GM12878 (cell line): ENCODE measurements at regions of chr9 and their contacts with region 1.

Region 1: DNA sequence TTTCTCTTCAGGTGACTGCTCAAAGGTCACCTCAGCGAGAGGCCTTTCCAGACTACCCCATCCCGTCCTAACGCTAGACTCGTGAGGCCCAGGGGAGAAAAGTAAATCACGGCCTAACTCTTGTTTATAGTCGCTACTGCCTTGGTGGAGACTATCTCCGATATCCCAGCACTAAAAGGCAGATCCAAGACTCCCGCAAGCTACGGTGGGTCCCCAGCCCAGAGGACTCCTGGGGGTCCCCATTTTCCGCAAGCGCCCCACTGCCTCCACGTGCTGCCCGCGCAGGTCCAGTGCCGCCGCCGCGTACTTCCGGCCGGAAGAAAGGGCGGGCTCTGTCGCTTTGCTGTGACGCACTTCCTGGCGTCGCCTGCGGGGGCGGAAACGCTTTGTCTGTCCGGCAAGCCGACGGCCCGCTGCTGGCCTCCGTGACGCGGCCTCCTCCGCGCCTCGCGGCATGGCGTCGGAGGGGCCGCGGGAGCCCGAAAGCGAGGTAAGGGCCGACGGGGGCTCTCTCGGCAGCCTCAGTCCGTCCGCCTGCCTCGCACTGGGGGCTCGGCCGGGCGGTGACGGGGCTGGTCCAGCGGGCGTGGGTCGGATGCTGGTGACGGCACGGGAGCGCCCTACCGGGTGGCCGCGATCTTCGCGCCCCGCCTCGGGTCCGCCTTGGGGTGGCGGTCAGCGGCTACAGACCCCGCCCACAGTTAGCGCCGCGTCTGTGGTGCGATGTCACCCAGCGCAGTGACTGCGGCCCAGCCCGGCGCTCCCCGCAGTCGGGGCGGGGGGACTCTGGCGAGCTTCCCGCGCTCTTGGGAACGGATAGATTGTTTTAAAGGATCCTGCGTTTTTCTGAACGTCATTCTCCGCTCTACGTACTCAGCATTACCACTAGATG is at the start of gene SECISBP2:
- DNase-seq: peak; percentile 79
- ATAC-seq: peak; percentile 92
- H3K4me3 ChIP-seq: peak within 1 kb of the TSS; percentile 74
- H3K27ac ChIP-seq: peak within 1 kb of the TSS; percentile 98
- H3K4me1 ChIP-seq: peaks cover 8% of the 10 kb centered on the region
- H3K27me3 ChIP-seq: no peaks in the 10 kb centered on the region
- CTCF ChIP-seq: peak; percentile 63 to 74 (median 72); a peak in 5 of 6 replicates
- EP300 ChIP-seq: peak; percentile 9 to 14; a peak in 2 of 4 replicates
- POLR2A ChIP-seq: peak; percentile 97
- RAD21 ChIP-seq: no peak; the same call in 1 of the 2 replicates
- polyA plus RNA-seq, gene SECISBP2: 4.6 to 6.6 TPM

Region 2: DNA sequence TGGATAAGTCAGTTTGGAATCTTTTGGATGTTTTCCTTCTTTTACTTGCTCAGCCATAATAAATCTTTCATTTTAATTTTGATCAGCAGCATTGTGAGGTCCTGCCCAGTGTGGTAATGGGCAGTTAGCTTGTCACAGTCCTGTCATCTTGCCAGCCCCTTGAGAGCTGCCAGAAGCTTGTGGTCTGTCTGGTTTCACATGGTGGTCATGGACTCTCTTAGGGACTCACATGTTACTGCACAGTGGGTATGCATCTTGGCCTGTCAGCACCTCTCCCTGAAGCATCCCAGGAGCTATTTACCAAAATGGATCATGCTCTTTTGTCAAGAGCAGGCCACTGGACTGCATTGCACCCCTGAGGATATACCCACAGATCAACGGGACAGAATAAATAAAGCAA is 1760.4 kb before region 1 on chr9:
- CTCF ChIA-PET with region 1: no interaction called
- POLR2A ChIA-PET with region 1: no interaction called
- RAD21 ChIA-PET with region 1: no interaction called
- SMC1A ChIA-PET with region 1: no interaction called
- in situ Hi-C with region 1: loop called (anchors 25 kb)
- intact Hi-C with region 1: no loop called
- DNase-seq: peak; percentile 64
- ATAC-seq: peak; percentile 71
- H3K4me3 ChIP-seq: no peak overlapping the region
- H3K27ac ChIP-seq: peak overlapping the region; percentile 75
- H3K4me1 ChIP-seq: peaks cover 64% of the 10 kb centered on the region
- H3K27me3 ChIP-seq: no peaks in the 10 kb centered on the region
- CTCF ChIP-seq: no peak
- EP300 ChIP-seq: no peak
- POLR2A ChIP-seq: no peak
- RAD21 ChIP-seq: no peak

Region 3: GRCh38 chr9:89096807-89097206 is 221.6 kb before region 1 on chr9:
- CTCF ChIA-PET with region 1: no interaction called
- POLR2A ChIA-PET with region 1: no interaction called
- RAD21 ChIA-PET with region 1: no interaction called
- SMC1A ChIA-PET with region 1: no interaction called
- in situ Hi-C with region 1: no loop called
- intact Hi-C with region 1: no loop called
- DNase-seq: no peak
- ATAC-seq: no peak
- H3K4me3 ChIP-seq: no peak overlapping the region
- H3K27ac ChIP-seq: no peak overlapping the region
- H3K4me1 ChIP-seq: no peaks in the 10 kb centered on the region
- H3K27me3 ChIP-seq: no peaks in the 10 kb centered on the region
- CTCF ChIP-seq: no peak
- EP300 ChIP-seq: no peak
- POLR2A ChIP-seq: no peak
- RAD21 ChIP-seq: no peak

Region 4: DNA sequence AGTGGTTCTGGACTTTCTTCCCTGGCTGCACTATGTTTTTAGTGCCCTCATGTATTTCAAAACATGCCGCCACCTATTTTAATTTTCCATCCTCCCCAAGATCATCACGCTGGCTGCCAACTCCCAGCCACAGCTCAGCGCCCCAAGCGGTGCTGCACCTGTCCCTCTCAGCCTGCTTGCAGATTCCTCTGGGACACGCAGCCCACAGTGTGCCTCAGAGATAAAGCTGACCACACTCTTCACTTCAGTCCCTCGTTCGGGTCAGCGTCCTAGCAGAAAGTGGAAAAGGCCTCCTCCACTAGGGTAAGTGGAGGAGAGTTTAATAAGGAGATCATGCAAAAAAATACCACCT is 63.6 kb before region 1 on chr9:
- CTCF ChIA-PET with region 1: no interaction called
- POLR2A ChIA-PET with region 1: no interaction called
- RAD21 ChIA-PET with region 1: no interaction called
- SMC1A ChIA-PET with region 1: no interaction called
- in situ Hi-C with region 1: no loop called
- intact Hi-C with region 1: no loop called
- DNase-seq: no peak
- ATAC-seq: no peak
- H3K4me3 ChIP-seq: no peak overlapping the region
- H3K27ac ChIP-seq: no peak overlapping the region
- H3K4me1 ChIP-seq: no peaks in the 10 kb centered on the region
- H3K27me3 ChIP-seq: no peaks in the 10 kb centered on the region
- CTCF ChIP-seq: no peak
- EP300 ChIP-seq: no peak
- POLR2A ChIP-seq: no peak
- RAD21 ChIP-seq: no peak

Region 5: DNA sequence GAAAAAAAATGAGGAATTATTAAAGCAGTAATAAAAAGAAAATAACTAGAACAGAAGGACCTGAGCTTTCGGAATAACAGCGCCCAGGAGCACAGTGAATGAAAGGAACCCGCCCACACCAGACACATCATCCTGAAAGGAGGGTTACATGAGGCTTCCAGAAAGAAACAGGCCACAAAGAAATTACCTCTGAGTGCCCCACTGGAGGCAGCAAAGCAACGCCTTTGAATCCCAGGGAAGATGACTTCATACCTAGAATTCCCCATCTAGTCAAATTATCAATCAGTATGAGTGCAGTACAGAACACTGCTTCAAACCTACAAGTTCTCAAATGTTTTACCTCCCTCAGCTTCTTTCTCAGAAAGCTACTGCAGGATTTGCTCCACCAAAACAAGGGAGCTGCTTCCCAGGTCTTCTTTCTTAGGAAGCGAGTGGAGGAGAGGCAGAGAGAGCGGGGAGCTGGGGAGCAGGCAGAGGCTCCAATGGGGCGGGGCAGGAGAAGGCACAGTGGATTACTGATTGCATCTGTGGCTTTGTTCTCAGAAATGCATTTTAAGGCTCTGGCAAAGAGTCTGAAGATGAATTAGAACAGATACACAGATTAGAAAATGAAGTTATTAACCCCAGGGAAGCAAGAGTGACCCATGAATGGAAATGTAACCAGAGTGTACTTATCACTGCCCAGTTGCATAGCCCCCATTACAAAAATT is 92.4 kb after region 1 on chr9:
- CTCF ChIA-PET with region 1: interaction called, 3 read pairs
- POLR2A ChIA-PET with region 1: no interaction called
- RAD21 ChIA-PET with region 1: no interaction called
- SMC1A ChIA-PET with region 1: interaction called, 3 read pairs
- in situ Hi-C with region 1: no loop called
- intact Hi-C with region 1: loop called (anchors 5 kb)
- DNase-seq: peak; percentile 75
- ATAC-seq: peak; percentile 72
- H3K4me3 ChIP-seq: peak overlapping the region; percentile 48
- H3K27ac ChIP-seq: peak overlapping the region; percentile 66
- H3K4me1 ChIP-seq: peaks cover 66% of the 10 kb centered on the region
- H3K27me3 ChIP-seq: no peaks in the 10 kb centered on the region
- CTCF ChIP-seq: peak; percentile 34 to 63 (median 50); a peak in 5 of 6 replicates
- EP300 ChIP-seq: no peak
- POLR2A ChIP-seq: no peak
- RAD21 ChIP-seq: peak; percentile 79

Region 6: GRCh38 chr9:89497978-89498851 is 179.8 kb after region 1 on chr9 and contains the start of gene SEMA4D:
- CTCF ChIA-PET with region 1: no interaction called
- POLR2A ChIA-PET with region 1: interaction called, 3 read pairs
- RAD21 ChIA-PET with region 1: no interaction called
- SMC1A ChIA-PET with region 1: no interaction called
- in situ Hi-C with region 1: no loop called
- intact Hi-C with region 1: loop called (anchors 10 kb)
- DNase-seq: no peak
- ATAC-seq: peak; percentile 44
- H3K4me3 ChIP-seq: peak within 1 kb of the TSS; percentile 99
- H3K27ac ChIP-seq: peak within 1 kb of the TSS; percentile 72
- H3K4me1 ChIP-seq: peaks cover 37% of the 10 kb centered on the region
- H3K27me3 ChIP-seq: no peaks in the 10 kb centered on the region
- CTCF ChIP-seq: no peak
- EP300 ChIP-seq: no peak
- POLR2A ChIP-seq: peak; percentile 57; the same call in 1 of the 2 replicates
- RAD21 ChIP-seq: no peak
- polyA plus RNA-seq, gene SEMA4D: 15.1 to 22.7 TPM

Region 7: DNA sequence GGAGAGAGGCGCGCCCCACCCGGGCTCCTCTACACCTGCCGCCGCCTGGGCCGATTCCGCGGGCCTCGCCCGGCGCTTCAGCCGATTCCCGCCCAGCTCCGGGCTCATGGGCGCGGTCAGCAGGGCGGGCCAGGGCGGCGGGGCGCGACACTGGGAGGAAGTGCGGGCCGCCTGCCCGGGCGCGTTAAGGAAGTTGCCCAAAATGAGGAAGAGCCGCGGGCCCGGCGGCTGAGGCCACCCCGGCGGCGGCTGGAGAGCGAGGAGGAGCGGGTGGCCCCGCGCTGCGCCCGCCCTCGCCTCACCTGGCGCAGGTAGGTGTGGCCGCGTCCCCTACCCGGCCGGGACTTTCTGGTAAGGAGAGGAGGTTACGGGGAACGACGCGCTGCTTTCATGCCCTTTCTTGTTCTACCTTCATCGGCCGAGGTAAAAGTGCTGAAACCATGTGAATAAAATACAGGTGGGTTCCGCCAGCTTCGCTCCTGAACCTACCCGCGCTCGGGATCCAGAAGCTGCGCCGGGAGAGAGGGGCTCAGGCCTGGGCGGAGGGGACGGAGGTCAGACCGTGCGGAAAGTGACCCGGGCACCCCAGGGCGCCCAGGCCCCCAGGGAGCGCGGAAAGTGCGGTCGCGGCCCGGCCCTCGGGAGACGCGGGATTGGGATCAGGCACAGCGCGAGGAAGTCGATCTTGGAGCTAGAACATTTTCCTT is 1483.4 kb after region 1 on chr9 and contains the start of gene SYK:
- CTCF ChIA-PET with region 1: no interaction called
- POLR2A ChIA-PET with region 1: no interaction called
- RAD21 ChIA-PET with region 1: no interaction called
- SMC1A ChIA-PET with region 1: no interaction called
- in situ Hi-C with region 1: no loop called
- intact Hi-C with region 1: loop called (anchors 5 kb)
- DNase-seq: no peak
- ATAC-seq: peak; percentile 72
- H3K4me3 ChIP-seq: peak within 1 kb of the TSS; percentile 81
- H3K27ac ChIP-seq: peak within 1 kb of the TSS; percentile 83
- H3K4me1 ChIP-seq: peaks cover 25% of the 10 kb centered on the region
- H3K27me3 ChIP-seq: no peaks in the 10 kb centered on the region
- CTCF ChIP-seq: no peak
- EP300 ChIP-seq: no peak
- POLR2A ChIP-seq: peak; percentile 66; the same call in 1 of the 2 replicates
- RAD21 ChIP-seq: no peak
- polyA plus RNA-seq, gene SYK: 23.1 to 24.8 TPM